Panc1 (cell line): ENCODE measurements at regions of chr4 and their contacts with region 1.

Region 1: GRCh38 chr4:57605376-57605775 is 495.2 kb upstream of the IGFBP7 start:
- DNase-seq: no peak
- ATAC-seq: no peak
- H3K4me3 ChIP-seq: no peak overlapping the region
- H3K27ac ChIP-seq: no peak overlapping the region
- H3K4me1 ChIP-seq: no peaks in the 10 kb centered on the region
- H3K27me3 ChIP-seq: no peaks in the 10 kb centered on the region
- CTCF ChIP-seq: no peak

Region 2: DNA sequence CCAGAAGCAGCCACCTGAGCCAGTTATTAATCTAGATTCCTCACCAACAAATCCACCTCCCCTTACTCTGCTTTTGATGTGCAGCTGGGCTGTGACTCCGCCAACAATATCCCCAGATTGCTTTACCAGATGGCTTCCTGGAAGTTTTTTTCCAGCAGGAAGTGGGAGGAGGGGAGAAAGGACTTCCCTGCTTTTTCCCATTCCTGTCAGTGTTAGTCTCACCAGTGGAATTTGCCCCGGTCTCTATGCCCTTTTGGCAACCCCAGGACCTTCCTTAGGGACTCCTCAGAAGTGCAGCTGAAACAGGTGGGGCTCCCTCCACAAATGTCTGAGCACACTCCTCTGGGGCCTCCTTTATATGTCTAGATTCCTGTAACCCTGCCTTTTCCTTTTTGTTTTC is 29.9 kb before region 1 on chr4:
- CTCF ChIA-PET with region 1: no interaction called
- POLR2A ChIA-PET with region 1: no interaction called
- in situ Hi-C with region 1: no loop called
- intact Hi-C with region 1: loop called (anchors 2 kb)
- DNase-seq: no peak
- ATAC-seq: no peak
- H3K4me3 ChIP-seq: no peak overlapping the region
- H3K27ac ChIP-seq: no peak overlapping the region
- H3K4me1 ChIP-seq: no peaks in the 10 kb centered on the region
- H3K27me3 ChIP-seq: no peaks in the 10 kb centered on the region
- CTCF ChIP-seq: no peak

Region 3: DNA sequence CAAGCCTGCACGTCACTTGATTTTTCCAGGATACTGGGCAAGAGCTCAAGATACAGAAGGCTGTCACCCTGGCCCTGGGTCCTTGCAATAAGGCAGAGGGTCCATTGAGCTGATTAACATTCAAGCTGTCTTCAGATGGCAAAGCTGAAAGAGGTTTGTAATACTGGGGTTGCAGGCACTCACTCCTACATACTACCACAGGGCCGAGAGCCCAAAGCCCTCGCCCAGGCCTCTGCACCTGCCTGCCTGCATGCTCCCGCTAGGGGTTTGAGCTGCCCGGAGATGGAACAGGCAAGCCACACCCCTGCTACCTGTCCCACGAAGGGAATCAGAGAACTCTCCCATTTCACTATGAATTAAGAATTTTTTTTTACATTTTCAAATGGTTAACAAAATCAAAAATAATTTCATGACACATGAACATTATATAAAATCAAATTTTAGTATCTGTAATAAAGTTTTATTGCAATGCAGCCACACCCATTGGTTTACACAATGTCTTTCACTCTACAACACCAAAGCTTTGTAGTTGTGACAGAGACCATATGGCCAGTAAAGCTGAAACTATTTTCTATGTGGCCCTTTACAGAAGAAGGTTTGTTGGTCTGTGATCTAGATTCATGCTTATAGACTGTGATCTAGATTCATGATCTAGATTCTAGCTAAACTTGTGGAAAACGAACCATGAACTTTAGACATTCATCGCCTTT is 35.2 kb after region 1 on chr4:
- CTCF ChIA-PET with region 1: no interaction called
- POLR2A ChIA-PET with region 1: no interaction called
- in situ Hi-C with region 1: no loop called
- intact Hi-C with region 1: no loop called
- DNase-seq: no peak
- ATAC-seq: no peak
- H3K4me3 ChIP-seq: no peak overlapping the region
- H3K27ac ChIP-seq: no peak overlapping the region
- H3K4me1 ChIP-seq: no peaks in the 10 kb centered on the region
- H3K27me3 ChIP-seq: no peaks in the 10 kb centered on the region
- CTCF ChIP-seq: no peak